Heart right ventricle (tissue), 16 donors: ENCODE measurements at regions of chr2 and their contacts with region 1.

Region 1: DNA sequence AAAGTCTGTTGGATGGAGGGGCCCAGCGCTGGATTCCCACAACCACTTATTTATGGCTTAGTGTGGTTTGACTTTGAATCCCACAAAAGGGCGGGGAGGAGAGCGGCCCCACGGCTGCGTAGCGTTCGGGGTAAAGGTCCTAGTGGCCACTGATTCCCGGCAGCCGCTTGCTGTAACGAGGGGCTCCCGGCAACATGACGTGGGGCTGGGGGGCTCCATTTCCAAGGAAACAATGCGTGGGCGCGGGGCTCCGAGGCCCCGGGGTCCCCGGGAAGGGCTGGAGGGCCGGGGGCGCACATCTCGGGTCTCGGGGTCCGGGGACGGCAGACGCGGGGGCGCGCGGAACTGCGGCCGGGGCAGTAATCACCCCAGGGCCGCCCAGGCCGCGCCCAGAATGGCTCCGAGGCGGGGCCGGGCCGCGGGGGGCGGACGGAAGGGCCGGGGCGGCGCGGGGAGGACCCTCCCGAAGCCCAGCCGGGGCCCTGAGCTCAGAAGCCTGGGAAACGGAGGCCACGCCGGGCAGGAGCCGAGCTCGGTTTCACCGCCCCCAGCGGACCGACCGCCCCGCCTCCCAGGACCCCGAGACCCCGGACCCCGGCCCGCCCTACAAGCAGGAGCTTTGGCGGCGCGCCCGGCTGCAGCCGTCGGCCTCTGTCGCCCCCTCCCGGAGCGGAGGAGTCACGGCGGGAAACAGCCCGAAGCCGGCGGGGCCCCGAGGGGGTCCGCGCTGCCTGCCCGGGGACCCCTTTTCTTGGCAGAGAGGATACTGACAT is 11.9 kb upstream of the MLPH start:
- DNase-seq: peak; percentile 81 to 88
- ATAC-seq: peak; percentile 79 to 93 (median 86)
- H3K4me3 ChIP-seq: peak overlapping the region; percentile 56 to 88 (median 74)
- H3K27ac ChIP-seq: peak overlapping the region; percentile 82 to 98 (median 94)
- H3K4me1 ChIP-seq: peaks cover 0 to 40% (median 25%) of the 10 kb centered on the region in 9 donors
- H3K27me3 ChIP-seq: peaks cover 0 to 21% (median 0%) of the 10 kb centered on the region in 7 donors
- CTCF ChIP-seq: peak; percentile 86 to 98 (median 95)

Region 2: DNA sequence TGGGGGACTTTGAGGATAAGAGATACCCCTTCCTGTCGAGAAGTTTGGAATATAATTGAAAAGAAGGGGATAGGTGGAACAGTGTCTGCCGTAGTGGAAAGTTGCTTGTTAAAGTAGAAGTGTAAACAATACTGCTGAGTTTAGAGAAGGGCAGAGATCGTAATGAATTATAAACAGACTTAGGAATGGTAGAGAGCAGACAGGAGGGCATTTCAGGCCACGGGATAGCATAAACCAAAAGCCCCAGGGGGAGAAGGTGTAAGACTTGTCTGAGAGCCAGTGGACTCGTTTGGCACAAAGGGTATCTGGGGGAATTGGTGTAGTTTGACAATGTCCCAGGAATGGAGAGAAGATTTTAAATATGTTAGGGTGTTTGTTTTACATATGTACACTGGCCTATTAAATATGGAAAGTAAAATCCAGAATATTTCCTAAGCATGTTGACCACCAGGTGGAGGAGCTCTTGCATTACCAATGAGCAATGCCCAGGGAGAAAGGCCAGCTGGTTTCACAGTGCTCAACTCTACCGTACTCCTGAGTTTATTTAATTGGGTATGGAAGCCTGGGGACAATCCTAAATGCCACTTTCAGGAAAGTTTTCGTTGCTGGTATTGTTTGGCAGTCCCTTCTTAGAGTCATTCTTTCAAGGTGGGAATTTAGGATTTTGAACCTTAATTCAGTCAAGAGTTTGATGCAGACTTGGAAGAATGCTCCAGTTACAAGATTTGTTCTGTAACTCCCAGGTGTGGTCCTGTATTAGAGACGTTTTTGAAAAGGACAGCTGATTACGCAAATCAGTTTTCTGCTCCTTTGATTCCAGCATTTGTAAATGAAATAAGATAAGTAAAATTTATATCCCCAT is 382.0 kb before region 1 on chr2:
- intact Hi-C with region 1: loop called in 1 of 10 experiments (anchors 2 kb)
- DNase-seq: peak in 1 of 2 donors; percentile 48
- ATAC-seq: peak; percentile 66 to 82 (median 72)
- H3K4me3 ChIP-seq: no peak overlapping the region
- H3K27ac ChIP-seq: peak overlapping the region in 2 of 10 donors; percentile 50 to 62
- H3K4me1 ChIP-seq: peaks cover 0 to 60% (median 21%) of the 10 kb centered on the region in 9 donors
- H3K27me3 ChIP-seq: no peaks in the 10 kb centered on the region
- CTCF ChIP-seq: peak; percentile 24 to 67 (median 54)

Region 3: DNA sequence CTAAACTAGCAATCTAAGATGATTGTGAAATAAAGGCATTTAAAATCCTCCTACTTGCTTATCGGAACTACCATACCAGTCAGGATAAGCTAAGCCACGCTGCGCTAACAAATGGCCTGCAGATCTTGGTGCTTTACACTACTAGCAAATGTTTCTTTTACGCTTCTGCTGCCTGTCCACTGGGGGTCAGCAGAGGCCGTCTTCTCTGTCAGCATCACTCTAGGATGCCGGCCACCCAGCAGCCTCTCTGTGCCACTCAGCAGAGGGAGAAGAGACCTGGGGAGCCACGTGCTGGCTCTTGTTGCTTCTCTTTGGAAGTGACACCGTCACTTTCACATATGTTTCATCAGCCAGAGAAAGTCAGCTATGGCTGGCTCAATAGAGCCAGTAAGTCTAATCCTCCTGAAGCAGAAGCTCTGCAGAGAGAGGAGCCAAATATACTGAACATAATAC is 352.9 kb before region 1 on chr2:
- intact Hi-C with region 1: loop called in 3 of 10 experiments (anchors 5 to 10 kb)
- DNase-seq: peak; percentile 47 to 65
- ATAC-seq: peak; percentile 56 to 86 (median 74)
- H3K4me3 ChIP-seq: no peak overlapping the region
- H3K27ac ChIP-seq: no peak overlapping the region
- H3K4me1 ChIP-seq: peaks cover 0 to 17% (median 0%) of the 10 kb centered on the region in 9 donors
- H3K27me3 ChIP-seq: no peaks in the 10 kb centered on the region
- CTCF ChIP-seq: peak; percentile 46 to 76 (median 71)

Region 4: DNA sequence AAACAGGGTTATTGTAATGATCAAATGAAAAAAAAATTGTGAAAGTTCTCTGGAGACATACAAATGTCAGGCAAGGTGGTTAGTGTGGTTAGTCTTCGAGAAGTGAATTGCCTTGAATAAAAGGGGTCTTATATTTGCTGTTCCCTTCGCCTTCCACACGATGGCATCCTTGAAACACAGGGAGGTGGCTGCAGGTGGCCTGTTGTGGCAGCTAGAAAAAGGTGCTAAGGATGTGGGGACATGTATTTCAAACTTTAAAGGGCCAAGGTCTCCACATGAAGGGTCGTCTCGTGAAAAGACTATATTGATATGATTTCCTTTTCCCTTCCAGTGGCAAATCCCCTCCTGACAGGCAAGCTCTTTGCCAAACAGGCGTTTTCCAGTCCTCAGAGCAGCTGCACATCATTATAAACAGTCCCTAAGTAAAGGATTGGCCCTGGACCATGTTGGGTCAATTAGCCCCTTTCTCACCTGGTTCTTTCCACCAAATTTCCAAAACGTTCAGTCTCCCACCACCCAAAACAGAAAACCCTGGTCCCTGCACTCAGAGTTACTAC is 321.0 kb before region 1 on chr2:
- intact Hi-C with region 1: loop called in 4 of 10 experiments (anchors 5 to 10 kb)
- DNase-seq: no peak
- ATAC-seq: no peak
- H3K4me3 ChIP-seq: no peak overlapping the region
- H3K27ac ChIP-seq: peak overlapping the region in 5 of 10 donors; percentile 14 to 82 (median 76)
- H3K4me1 ChIP-seq: peaks cover 0 to 28% (median 7%) of the 10 kb centered on the region in 9 donors
- H3K27me3 ChIP-seq: peaks cover 0 to 7% (median 0%) of the 10 kb centered on the region in 7 donors
- CTCF ChIP-seq: peak; percentile 12 to 67 (median 63)

Region 5: DNA sequence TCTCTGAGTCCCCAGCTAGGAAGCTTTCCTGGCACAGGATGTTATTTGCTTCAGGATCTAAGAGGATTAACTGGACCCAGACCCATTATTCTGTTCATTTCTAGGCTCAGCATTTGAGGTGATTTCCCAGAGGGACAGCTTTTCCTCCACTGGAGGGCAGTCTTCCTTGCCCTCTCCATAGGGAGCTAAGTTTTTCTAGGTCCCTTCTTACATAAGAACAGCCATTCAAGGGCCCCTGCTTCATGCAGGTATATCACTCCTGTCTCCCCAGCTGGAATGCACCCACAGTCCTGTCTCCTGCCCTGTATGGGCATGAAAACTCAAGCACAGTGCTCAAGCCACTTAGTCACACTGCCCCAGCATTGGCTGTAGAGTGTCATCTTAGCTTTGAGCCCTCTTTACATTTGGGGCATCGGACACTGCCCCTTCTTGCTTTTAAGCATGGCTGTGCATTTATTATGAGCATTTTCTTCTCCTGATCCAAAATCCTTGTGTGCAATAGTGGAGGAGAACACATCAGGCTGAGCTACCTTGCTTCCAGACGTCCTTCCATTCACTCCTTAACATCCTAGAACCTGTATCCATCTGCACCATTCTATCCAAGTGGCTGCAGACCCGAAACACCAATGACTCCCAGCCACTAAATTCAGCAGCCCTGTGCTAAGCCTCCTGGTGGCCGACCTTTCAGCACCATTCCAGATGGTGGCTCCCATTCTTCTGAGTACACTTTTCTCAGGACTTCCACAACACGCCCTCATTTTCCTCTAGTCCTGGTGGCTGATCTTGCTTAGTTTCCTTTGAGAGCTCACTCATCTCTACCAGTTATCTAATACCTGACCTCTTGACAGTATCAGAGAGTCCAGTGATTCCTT is 309.5 kb before region 1 on chr2:
- intact Hi-C with region 1: loop called in 1 of 10 experiments (anchors 5 kb)
- DNase-seq: no peak
- ATAC-seq: peak in 3 of 8 donors; percentile 12 to 39 (median 33)
- H3K4me3 ChIP-seq: no peak overlapping the region
- H3K27ac ChIP-seq: peak overlapping the region in 7 of 10 donors; percentile 33 to 75 (median 47)
- H3K4me1 ChIP-seq: peaks cover 0 to 12% (median 5%) of the 10 kb centered on the region in 9 donors
- H3K27me3 ChIP-seq: no peaks in the 10 kb centered on the region
- CTCF ChIP-seq: peak; percentile 10 to 61 (median 54)

Region 6: GRCh38 chr2:237421542-237422116 is 53.5 kb before region 1 on chr2:
- intact Hi-C with region 1: loop called in 8 of 10 experiments (anchors 1 to 5 kb)
- DNase-seq: peak; percentile 77 to 85
- ATAC-seq: peak; percentile 84 to 92 (median 88)
- H3K4me3 ChIP-seq: peak overlapping the region in 7 of 10 donors; percentile 1 to 38 (median 27)
- H3K27ac ChIP-seq: peak overlapping the region in 9 of 10 donors; percentile 0 to 54 (median 23)
- H3K4me1 ChIP-seq: peaks cover 0 to 28% (median 18%) of the 10 kb centered on the region in 9 donors
- H3K27me3 ChIP-seq: peaks cover 0 to 10% (median 3%) of the 10 kb centered on the region in 7 donors
- CTCF ChIP-seq: peak; percentile 61 to 93 (median 87)

Region 7: GRCh38 chr2:237572021-237572741 is 97.1 kb after region 1 on chr2:
- intact Hi-C with region 1: loop called in 1 of 10 experiments (anchors 2 kb)
- DNase-seq: peak; percentile 92 to 93
- ATAC-seq: peak; percentile 90 to 93 (median 92)
- H3K4me3 ChIP-seq: peak overlapping the region in 1 of 10 donors; percentile 24
- H3K27ac ChIP-seq: peak overlapping the region in 1 of 10 donors; percentile 19
- H3K4me1 ChIP-seq: peaks cover 0 to 45% (median 12%) of the 10 kb centered on the region in 9 donors
- H3K27me3 ChIP-seq: peaks cover 0 to 5% (median 0%) of the 10 kb centered on the region in 7 donors
- CTCF ChIP-seq: peak; percentile 97 to 100 (median 99)